ENCODE measurements at regions of chr19 and their contacts with region 1.

Region 1: GRCh38 chr19:53132141-53132991 is at the start of gene ZNF415:
- DNase-seq: peak; percentile 11 to 87
- H3K4me3 ChIP-seq: peak within 1 kb of the TSS; percentile 72 to 74
- H3K27ac ChIP-seq: peak within 1 kb of the TSS; percentile 49 to 58
- H3K4me1 ChIP-seq: peaks cover 4 to 6% of the 10 kb centered on the region in 2 donors
- H3K27me3 ChIP-seq: no peaks in the 10 kb centered on the region
- CTCF ChIP-seq: no peak
- total RNA-seq, gene ZNF415: 1.3 TPM

Region 2: GRCh38 chr19:52637718-52638585 is 494.4 kb before region 1 on chr19 and contains the start of gene ZNF83:
- intact Hi-C with region 1: no loop called
- DNase-seq: peak; percentile 92 to 99
- H3K4me3 ChIP-seq: peak within 1 kb of the TSS; percentile 62 to 77
- H3K27ac ChIP-seq: peak within 1 kb of the TSS; percentile 87 to 92
- H3K4me1 ChIP-seq: peaks cover 0 to 14% of the 10 kb centered on the region in 2 donors
- H3K27me3 ChIP-seq: no peaks in the 10 kb centered on the region
- CTCF ChIP-seq: no peak
- total RNA-seq, gene ZNF83: 29.1 TPM

Region 3: DNA sequence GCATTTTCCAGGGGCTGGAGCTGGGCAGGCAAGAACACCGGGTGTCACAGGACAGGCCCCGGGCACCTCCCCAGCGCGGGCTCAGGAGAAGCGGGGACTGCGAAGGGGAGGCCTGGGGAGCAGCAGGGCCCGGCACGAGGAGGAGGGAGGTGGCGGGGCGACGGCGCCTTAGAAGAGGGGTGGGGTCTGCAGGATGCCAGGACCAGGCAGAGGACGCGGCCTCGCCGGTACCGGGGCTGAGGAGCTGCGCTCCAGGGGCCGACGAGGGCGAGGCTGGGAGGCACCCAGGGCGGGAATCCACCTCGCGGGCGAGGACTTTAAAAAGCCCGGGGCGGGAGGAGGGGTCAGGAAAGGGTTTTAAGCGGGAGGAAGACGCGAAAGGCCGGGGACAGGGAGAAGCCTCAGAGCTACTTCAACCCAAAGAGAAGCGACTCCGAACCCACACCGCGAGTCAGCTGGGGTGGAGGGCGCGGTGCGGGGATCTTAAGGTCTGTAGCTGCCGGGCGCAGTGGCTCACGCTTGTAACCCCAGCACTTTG is 25.8 kb after region 1 on chr19:
- intact Hi-C with region 1: loop called (anchors 2 kb)
- DNase-seq: peak in 1 of 2 donors; percentile 65
- H3K4me3 ChIP-seq: peak overlapping the region; percentile 78 to 86
- H3K27ac ChIP-seq: peak overlapping the region; percentile 78 to 82
- H3K4me1 ChIP-seq: no peaks in the 10 kb centered on the region
- H3K27me3 ChIP-seq: no peaks in the 10 kb centered on the region
- CTCF ChIP-seq: no peak

Region 4: GRCh38 chr19:53365134-53365898 is 232.9 kb after region 1 on chr19 and contains the start of gene ZNF525:
- intact Hi-C with region 1: no loop called
- DNase-seq: peak; percentile 81 to 94
- H3K4me3 ChIP-seq: peak within 1 kb of the TSS; percentile 63 to 67
- H3K27ac ChIP-seq: peak within 1 kb of the TSS; percentile 73 to 81
- H3K4me1 ChIP-seq: peaks cover 0 to 6% of the 10 kb centered on the region in 2 donors
- H3K27me3 ChIP-seq: no peaks in the 10 kb centered on the region
- CTCF ChIP-seq: peak in 1 of 3 experiments; percentile 26
- total RNA-seq, gene ZNF525: 3.0 TPM